ENCODE measurements at regions of chr1 and their contacts with region 1.

Region 1: GRCh38 chr1:21963477-21964217 is 13.2 kb upstream of the CELA3B start:
- DNase-seq: peak; percentile 65
- ATAC-seq: peak; percentile 88
- H3K4me3 ChIP-seq: no peak overlapping the region
- H3K27ac ChIP-seq: no peak overlapping the region
- H3K4me1 ChIP-seq: peaks cover 39% of the 10 kb centered on the region
- H3K27me3 ChIP-seq: no peaks in the 10 kb centered on the region
- CTCF ChIP-seq: peak; percentile 96
- EP300 ChIP-seq: 0 out of 4 replicates have a peak, but pooled peaks of 1 of the 2 experiments have one; percentile 7
- POLR2A ChIP-seq: no peak
- RAD21 ChIP-seq: peak; percentile 94

Region 2: DNA sequence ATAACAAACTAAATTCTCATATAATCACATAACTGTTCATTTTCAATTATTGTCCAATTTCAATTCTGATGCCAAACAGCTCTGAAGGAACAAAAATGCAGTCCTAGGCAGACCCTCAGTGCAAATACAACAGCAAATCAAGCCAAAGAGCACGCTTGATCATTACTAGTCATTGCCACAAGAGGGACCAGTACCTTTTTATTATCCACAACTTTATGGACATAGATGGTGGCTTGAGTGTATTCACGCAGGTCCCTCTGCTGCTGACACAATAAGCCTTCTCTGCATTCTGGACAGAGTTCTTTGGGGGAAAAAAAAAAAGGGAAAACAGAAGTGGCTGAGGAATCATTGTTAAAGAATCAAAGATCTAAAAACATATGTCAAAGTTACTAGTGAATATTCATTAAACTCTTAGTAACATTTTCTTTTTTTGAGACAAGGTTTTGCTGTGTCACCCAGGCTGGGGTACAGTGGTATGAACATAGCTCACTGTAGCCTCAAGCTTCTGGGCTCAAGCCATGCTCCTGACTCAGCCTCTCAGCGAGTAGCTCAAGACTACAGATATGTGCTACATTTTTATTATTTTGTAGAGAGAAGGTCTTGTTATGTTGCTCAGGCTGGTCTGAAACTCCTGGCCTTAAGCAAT is 260.2 kb before region 1 on chr1:
- CTCF ChIA-PET with region 1: interaction called, 8 read pairs
- POLR2A ChIA-PET with region 1: no interaction called
- in situ Hi-C with region 1: loop called (anchors 10 kb)
- intact Hi-C with region 1: no loop called
- DNase-seq: peak; percentile 39
- ATAC-seq: peak; percentile 71; the same call in 2 of the 3 replicates
- H3K4me3 ChIP-seq: no peak overlapping the region
- H3K27ac ChIP-seq: peak overlapping the region; percentile 17
- H3K4me1 ChIP-seq: peaks cover 41% of the 10 kb centered on the region
- H3K27me3 ChIP-seq: no peaks in the 10 kb centered on the region
- CTCF ChIP-seq: peak; percentile 49
- EP300 ChIP-seq: no peak
- POLR2A ChIP-seq: no peak
- RAD21 ChIP-seq: no peak